Caco-2 (cell line): ENCODE measurements at regions of chr2 and their contacts with region 1.

Region 1: GRCh38 chr2:198127627-198128026 is 323.2 kb downstream of the PLCL1 start:
- DNase-seq: peak in 1 of 2 experiments; percentile 46
- H3K4me3 ChIP-seq: no peak overlapping the region
- H3K4me3 Mint-ChIP-seq: no peak overlapping the region
- H3K27ac Mint-ChIP-seq: no peak overlapping the region
- H3K4me1 ChIP-seq: no peaks in the 10 kb centered on the region
- H3K4me1 Mint-ChIP-seq: no peaks in the 10 kb centered on the region
- H3K27me3 ChIP-seq: no peaks in the 10 kb centered on the region
- H3K27me3 Mint-ChIP-seq: peaks cover 10% of the 10 kb centered on the region
- CTCF ChIP-seq: peak; percentile 67 to 75

Region 2: GRCh38 chr2:197804049-197804757 is 323.4 kb before region 1 on chr2 and contains the start of gene PLCL1:
- CTCF ChIA-PET with region 1: interaction called, 5 read pairs
- POLR2A ChIA-PET with region 1: no interaction called
- intact Hi-C with region 1: loop called (anchors 1 kb)
- DNase-seq: peak; percentile 94
- H3K4me3 ChIP-seq: peak within 1 kb of the TSS; percentile 40
- H3K4me3 Mint-ChIP-seq: peak within 1 kb of the TSS; percentile 84
- H3K27ac Mint-ChIP-seq: peak within 1 kb of the TSS; percentile 47
- H3K4me1 ChIP-seq: peaks cover 5% of the 10 kb centered on the region; the same call in 1 of the 2 replicates
- H3K4me1 Mint-ChIP-seq: peaks cover 8% of the 10 kb centered on the region
- H3K27me3 ChIP-seq: peaks cover 4% of the 10 kb centered on the region
- H3K27me3 Mint-ChIP-seq: peaks cover 24% of the 10 kb centered on the region
- CTCF ChIP-seq: no peak
- total RNA-seq, gene PLCL1: 1.6 TPM in 2 replicates

Region 3: GRCh38 chr2:197851451-197851850 is 276.2 kb before region 1 on chr2:
- CTCF ChIA-PET with region 1: no interaction called
- POLR2A ChIA-PET with region 1: no interaction called
- intact Hi-C with region 1: loop called (anchors 1 kb)
- DNase-seq: peak in 1 of 2 experiments; percentile 16
- H3K4me3 ChIP-seq: no peak overlapping the region
- H3K4me3 Mint-ChIP-seq: no peak overlapping the region
- H3K27ac Mint-ChIP-seq: no peak overlapping the region
- H3K4me1 ChIP-seq: no peaks in the 10 kb centered on the region
- H3K4me1 Mint-ChIP-seq: peaks cover 5% of the 10 kb centered on the region
- H3K27me3 ChIP-seq: no peaks in the 10 kb centered on the region
- H3K27me3 Mint-ChIP-seq: peaks cover 6% of the 10 kb centered on the region
- CTCF ChIP-seq: peak in 1 of 2 experiments; percentile 48

Region 4: DNA sequence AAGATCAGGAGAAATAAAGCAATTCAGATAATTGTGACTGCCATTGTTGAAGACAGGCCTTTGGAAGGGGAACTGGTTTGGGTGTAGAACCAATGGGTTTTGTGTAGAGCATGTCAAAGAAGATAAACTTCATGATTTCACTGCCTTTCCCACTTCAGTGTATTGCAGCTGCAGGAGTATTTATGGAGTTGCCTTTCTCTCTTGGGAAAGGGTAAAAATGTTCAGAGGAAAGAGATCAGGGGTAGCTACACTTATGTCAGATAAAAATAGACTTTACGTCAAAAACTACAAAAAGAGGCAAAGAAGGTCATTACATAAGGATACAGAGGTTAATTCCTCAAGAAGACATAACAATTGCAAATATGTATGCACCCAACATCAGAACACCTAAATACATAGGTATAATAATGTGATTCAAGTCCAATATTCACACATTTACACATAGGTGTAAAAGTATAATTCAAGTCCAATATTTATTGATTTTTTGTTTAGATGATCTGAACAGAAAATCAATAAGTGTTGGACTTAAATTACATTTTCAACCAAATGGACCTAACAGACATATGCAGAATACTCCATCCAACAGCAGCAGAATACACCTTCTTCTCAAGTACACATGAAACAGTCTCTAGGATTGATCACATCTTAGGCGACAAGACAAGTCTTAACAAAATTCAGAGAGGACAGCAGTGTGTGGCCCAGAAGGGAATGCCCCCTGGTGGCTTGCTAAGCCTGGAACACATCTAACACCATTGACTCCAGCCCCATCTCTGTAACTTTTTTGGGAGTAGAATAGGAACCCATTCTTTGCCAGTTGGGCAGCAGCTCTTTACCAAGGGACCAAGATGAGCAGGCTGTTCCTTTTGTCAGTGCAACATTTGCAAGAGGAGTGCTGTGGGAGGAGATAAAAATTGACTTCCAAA is 73.6 kb before region 1 on chr2:
- CTCF ChIA-PET with region 1: no interaction called
- POLR2A ChIA-PET with region 1: no interaction called
- intact Hi-C with region 1: loop called (anchors 2 kb)
- DNase-seq: peak; percentile 49 to 51
- H3K4me3 ChIP-seq: no peak overlapping the region
- H3K4me3 Mint-ChIP-seq: no peak overlapping the region
- H3K27ac Mint-ChIP-seq: no peak overlapping the region
- H3K4me1 ChIP-seq: no peaks in the 10 kb centered on the region
- H3K4me1 Mint-ChIP-seq: no peaks in the 10 kb centered on the region
- H3K27me3 ChIP-seq: no peaks in the 10 kb centered on the region
- H3K27me3 Mint-ChIP-seq: peaks cover 5% of the 10 kb centered on the region
- CTCF ChIP-seq: peak; percentile 57 to 78